ENCODE measurements at regions of chr7 and their contacts with region 1.

Region 1: GRCh38 chr7:14457568-14458453 is 444.7 kb downstream of the DGKB start:
- DNase-seq: peak; percentile 89
- H3K4me3 ChIP-seq: peak overlapping the region; percentile 48
- H3K27ac ChIP-seq: no peak overlapping the region
- H3K4me1 ChIP-seq: no peaks in the 10 kb centered on the region
- H3K27me3 ChIP-seq: no peaks in the 10 kb centered on the region

Region 2: GRCh38 chr7:13279854-13280435 is 1177.9 kb before region 1 on chr7:
- in situ Hi-C with region 1: loop called (anchors 25 kb)
- DNase-seq: peak; percentile 67
- H3K4me3 ChIP-seq: no peak overlapping the region
- H3K27ac ChIP-seq: no peak overlapping the region
- H3K4me1 ChIP-seq: no peaks in the 10 kb centered on the region
- H3K27me3 ChIP-seq: no peaks in the 10 kb centered on the region

Region 3: GRCh38 chr7:13508586-13508985 is 949.2 kb before region 1 on chr7:
- in situ Hi-C with region 1: loop called (anchors 25 kb)
- DNase-seq: peak; percentile 4
- H3K4me3 ChIP-seq: no peak overlapping the region
- H3K27ac ChIP-seq: no peak overlapping the region
- H3K4me1 ChIP-seq: 0 out of 2 replicates have a peak, but pooled peaks cover 4% of the 10 kb centered on the region
- H3K27me3 ChIP-seq: no peaks in the 10 kb centered on the region

Region 4: DNA sequence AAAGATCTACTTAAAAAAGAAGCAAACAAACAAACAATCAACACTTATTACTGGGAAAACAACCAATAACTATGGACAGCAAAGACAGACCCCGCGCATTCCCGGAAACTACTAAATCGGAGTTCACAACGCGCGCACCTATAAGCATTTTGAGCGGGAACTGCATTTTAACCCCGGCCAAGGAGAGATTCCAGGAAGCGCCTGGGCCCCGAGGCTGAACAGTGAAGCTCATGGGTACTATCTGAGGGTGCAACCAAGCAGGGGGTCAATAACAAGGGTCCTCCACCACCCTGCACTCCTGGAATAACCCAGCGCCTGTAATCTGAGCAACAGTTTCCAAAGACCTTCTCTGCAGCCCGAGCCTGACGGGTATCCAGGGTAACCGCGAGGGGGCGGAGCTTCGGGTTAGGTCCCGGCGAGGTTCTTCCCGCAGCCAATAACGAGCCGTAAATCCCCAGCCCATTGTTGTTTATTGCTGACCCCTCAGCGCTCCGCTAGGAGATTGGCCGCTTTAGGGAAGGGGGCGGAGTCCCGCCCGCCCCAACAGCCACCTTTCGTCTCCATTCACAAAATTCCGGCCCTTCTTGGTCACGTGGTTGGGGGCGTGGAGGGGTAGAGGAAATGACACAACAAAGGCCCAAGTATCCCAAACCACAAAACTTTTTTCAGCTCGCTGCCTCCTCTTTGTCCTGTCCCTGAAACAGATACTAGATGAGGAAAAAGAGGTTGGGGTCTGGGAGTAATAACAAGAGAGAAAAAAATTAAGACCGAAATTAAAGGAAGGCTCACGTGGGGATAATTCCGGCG is 466.6 kb before region 1 on chr7:
- in situ Hi-C with region 1: loop called (anchors 10 kb)
- DNase-seq: peak; percentile 99
- H3K4me3 ChIP-seq: peak overlapping the region; percentile 100
- H3K27ac ChIP-seq: peak overlapping the region; percentile 64
- H3K4me1 ChIP-seq: peaks cover 24% of the 10 kb centered on the region
- H3K27me3 ChIP-seq: no peaks in the 10 kb centered on the region